IMR-90 (cell line): ENCODE measurements at regions of chr2 and their contacts with region 1.

Region 1: DNA sequence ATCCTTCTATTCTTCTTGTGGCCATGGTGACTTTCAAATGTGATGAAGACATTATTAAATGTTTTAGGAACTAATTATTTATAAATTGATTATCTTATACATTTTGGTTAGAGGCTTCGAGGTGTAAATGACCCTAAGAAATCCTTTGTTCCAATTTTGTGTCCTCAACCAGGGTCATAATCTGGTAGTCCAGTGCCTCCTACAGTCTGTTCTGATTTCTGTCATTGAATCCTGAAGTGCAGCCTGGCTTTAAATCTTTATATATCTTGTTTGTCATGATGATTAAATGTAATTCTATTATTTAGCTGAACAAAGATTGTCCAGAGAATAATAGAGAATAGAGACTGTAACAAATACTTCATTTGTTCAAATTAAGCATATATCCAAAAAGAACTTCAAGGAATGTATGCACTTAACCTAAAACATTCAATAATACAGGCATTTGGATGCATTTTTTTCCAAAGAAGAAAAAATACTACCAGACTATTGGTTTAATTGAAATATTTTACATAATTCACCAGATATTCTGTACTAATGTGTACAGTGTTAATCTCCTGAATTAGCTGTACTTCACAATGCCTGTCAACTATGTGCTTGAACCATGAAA is 89.8 kb downstream of the PRPF40A start:
- DNase-seq: peak; percentile 55
- ATAC-seq: peak; percentile 82
- H3K4me3 ChIP-seq: no peak overlapping the region
- H3K27ac ChIP-seq: no peak overlapping the region
- H3K4me1 ChIP-seq: no peaks in the 10 kb centered on the region
- H3K27me3 ChIP-seq: no peaks in the 10 kb centered on the region
- CTCF ChIP-seq: peak; percentile 76
- POLR2A ChIP-seq: no peak
- RAD21 ChIP-seq: peak; percentile 87

Region 2: GRCh38 chr2:152175458-152176325 is 451.8 kb before region 1 on chr2 and contains the start of gene STAM2:
- CTCF ChIA-PET with region 1: interaction called, 3 read pairs
- POLR2A ChIA-PET with region 1: no interaction called
- dilution Hi-C with region 1: loop called (anchors 25 kb)
- in situ Hi-C with region 1: no loop called
- intact Hi-C with region 1: loop called (anchors 2 kb)
- DNase-seq: peak; percentile 88
- ATAC-seq: peak; percentile 89
- H3K4me3 ChIP-seq: peak within 1 kb of the TSS; percentile 86
- H3K27ac ChIP-seq: peak within 1 kb of the TSS; percentile 97
- H3K4me1 ChIP-seq: peaks cover 2% of the 10 kb centered on the region
- H3K27me3 ChIP-seq: no peaks in the 10 kb centered on the region
- CTCF ChIP-seq: peak; percentile 99
- POLR2A ChIP-seq: peak; percentile 92
- RAD21 ChIP-seq: peak; percentile 87
- total RNA-seq, gene STAM2: 29.2 and 55.0 TPM in 2 replicates

Region 3: GRCh38 chr2:152189622-152190495 is 437.6 kb before region 1 on chr2:
- CTCF ChIA-PET with region 1: interaction called, 3 read pairs
- POLR2A ChIA-PET with region 1: no interaction called
- dilution Hi-C with region 1: loop called (anchors 25 kb)
- in situ Hi-C with region 1: loop called (anchors 5 kb)
- intact Hi-C with region 1: loop called (anchors 1 kb)
- DNase-seq: peak; percentile 77
- ATAC-seq: peak; percentile 99
- H3K4me3 ChIP-seq: no peak overlapping the region
- H3K27ac ChIP-seq: no peak overlapping the region
- H3K4me1 ChIP-seq: no peaks in the 10 kb centered on the region
- H3K27me3 ChIP-seq: no peaks in the 10 kb centered on the region
- CTCF ChIP-seq: peak; percentile 96
- POLR2A ChIP-seq: peak; percentile 52; the same call in 1 of the 2 replicates
- RAD21 ChIP-seq: peak; percentile 97

Region 4: DNA sequence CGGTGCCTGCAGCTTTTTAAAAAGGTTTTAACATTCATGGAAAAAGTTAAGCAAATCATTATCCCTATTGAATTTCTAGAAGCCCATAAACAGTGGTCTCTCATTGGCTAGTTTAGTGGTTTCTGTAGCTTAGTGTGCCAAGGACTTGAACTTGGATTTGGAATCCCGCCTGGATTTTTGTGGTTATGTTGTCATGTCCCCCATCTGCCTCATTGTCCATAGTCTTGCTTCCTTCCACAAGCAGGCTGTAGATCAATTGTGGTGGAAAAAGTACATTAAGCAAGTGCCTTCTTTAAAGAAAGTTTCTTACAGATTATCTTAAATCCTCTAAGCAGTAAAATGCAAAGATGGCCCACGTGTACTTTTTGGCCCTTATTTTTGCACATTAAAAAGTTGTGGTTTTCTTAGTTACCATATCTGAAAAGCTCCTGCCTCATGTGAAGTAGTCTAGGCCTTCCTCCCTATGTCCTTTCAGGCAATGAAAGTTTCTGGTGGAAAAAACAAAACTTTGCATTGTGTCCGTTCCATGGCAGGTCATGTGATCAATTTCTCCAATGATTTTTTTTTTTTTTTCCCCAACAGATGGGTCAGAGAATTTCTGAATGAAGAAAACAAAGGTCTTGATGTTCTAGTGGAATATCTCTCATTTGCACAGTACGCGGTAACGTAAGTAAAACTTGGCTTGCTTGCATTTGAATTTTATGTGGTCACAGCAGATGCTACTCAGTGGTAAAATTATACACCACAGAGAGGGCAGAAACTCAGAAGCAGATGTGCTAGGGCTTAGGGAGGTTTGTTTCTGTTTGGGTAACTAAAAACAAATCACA is 69.1 kb before region 1 on chr2:
- CTCF ChIA-PET with region 1: interaction called, 3 read pairs
- POLR2A ChIA-PET with region 1: no interaction called
- dilution Hi-C with region 1: no loop called
- in situ Hi-C with region 1: no loop called
- intact Hi-C with region 1: loop called (anchors 10 kb)
- DNase-seq: peak; percentile 94
- ATAC-seq: peak; percentile 75
- H3K4me3 ChIP-seq: no peak overlapping the region
- H3K27ac ChIP-seq: no peak overlapping the region
- H3K4me1 ChIP-seq: peaks cover 7% of the 10 kb centered on the region
- H3K27me3 ChIP-seq: no peaks in the 10 kb centered on the region
- CTCF ChIP-seq: no peak
- POLR2A ChIP-seq: no peak
- RAD21 ChIP-seq: no peak